H1 (cell line): ENCODE measurements at regions of chr12 and their contacts with region 1.

Region 1: GRCh38 chr12:111788178-111788654 is 21.5 kb downstream of the ALDH2 start:
- DNase-seq: no peak
- H3K4me3 ChIP-seq: no peak overlapping the region
- H3K27ac ChIP-seq: no peak overlapping the region
- H3K4me1 ChIP-seq: no peaks in the 10 kb centered on the region
- H3K27me3 ChIP-seq: no peaks in the 10 kb centered on the region
- CTCF ChIP-seq: peak in 2 of 3 experiments; percentile 35 to 54; a peak in 3 of 4 replicates
- EP300 ChIP-seq: no peak
- POLR2A ChIP-seq: no peak
- RAD21 ChIP-seq: peak; percentile 66 to 75

Region 2: DNA sequence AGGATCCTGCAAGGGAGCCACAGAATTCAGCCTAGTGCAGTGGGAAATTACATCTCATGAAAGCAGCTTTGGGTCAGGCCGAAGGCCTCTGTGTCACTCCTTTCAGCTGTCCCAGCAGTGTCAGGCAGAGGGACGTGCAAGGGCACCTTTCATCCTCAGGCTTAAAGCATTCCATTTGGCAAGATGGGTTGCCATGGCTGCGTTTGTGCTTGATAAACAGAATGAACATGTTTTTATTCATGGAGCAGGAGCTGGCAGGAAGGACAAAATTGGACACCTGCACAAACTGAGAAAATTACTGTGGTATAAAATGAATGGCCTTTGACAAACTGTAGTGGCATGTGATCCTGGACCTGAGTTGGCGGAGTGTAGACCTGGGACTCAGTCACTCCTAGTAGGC is 72.9 kb before region 1 on chr12:
- CTCF ChIA-PET with region 1: interaction called, 11 read pairs
- POLR2A ChIA-PET with region 1: no interaction called
- DNase-seq: no peak
- H3K4me3 ChIP-seq: no peak overlapping the region
- H3K27ac ChIP-seq: no peak overlapping the region
- H3K4me1 ChIP-seq: no peaks in the 10 kb centered on the region
- H3K27me3 ChIP-seq: no peaks in the 10 kb centered on the region
- CTCF ChIP-seq: no peak
- EP300 ChIP-seq: no peak
- POLR2A ChIP-seq: no peak
- RAD21 ChIP-seq: no peak

Region 3: DNA sequence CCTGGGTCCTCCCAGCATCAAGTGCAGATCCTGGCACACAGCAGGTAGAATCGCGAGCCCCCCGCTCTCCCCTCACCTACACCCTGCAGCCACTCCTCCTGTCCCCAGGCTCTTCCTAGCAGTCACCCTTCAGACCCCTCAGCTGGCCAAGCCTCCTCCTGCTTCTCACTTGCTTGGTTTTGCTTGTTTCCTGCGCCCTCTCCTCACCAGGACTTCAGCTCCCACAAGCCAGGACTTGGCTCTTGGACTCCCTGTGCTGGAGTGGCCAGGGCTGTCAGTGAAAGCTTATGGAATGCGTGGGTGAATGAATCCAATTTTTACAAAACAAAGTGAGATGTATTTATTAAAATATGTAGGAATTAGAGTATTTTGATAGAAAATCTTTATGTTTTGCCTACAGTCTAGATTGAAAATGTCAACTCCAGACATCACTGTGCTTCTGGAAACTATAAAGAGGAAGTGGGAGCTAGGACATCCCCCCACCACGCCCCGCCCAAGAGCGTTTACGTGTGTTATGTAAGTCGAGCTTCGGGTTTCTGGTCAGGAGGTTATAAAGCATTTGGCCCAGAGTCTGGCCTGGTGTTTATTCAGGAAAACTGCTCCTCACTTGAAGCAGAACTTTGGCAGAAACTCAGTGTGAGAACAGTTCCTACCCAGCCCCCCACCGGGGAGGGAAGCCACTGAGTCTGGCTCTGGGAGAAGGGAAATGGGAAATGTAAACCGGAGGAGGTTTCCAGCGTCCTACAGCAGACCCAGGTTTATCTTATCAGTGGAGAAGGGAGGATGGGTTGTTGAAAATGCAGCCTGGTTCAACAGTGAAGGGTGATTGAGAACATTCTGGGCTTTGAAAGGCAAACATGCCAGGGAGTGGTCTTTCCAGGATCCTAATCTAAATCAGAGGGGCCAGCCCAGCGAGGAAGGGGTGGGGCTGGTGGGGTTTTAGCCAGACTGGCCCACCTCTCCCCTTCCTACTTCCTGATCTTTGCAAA is 12.7 kb before region 1 on chr12:
- CTCF ChIA-PET with region 1: interaction called, 11 read pairs
- POLR2A ChIA-PET with region 1: interaction called, 4 read pairs
- DNase-seq: no peak
- H3K4me3 ChIP-seq: no peak overlapping the region
- H3K27ac ChIP-seq: no peak overlapping the region
- H3K4me1 ChIP-seq: peaks cover 0 to 3% (median 0%) of the 10 kb centered on the region in 4 experiments; a peak in 4 of 7 replicates
- H3K27me3 ChIP-seq: no peaks in the 10 kb centered on the region
- CTCF ChIP-seq: no peak
- EP300 ChIP-seq: no peak
- POLR2A ChIP-seq: no peak
- RAD21 ChIP-seq: no peak

Region 4: GRCh38 chr12:111842556-111843396 is 54.6 kb after region 1 on chr12:
- CTCF ChIA-PET with region 1: no interaction called
- POLR2A ChIA-PET with region 1: no interaction called
- DNase-seq: no peak
- H3K4me3 ChIP-seq: peak overlapping the region; percentile 75 to 94 (median 86)
- H3K27ac ChIP-seq: peak overlapping the region; percentile 99
- H3K4me1 ChIP-seq: no peaks in the 10 kb centered on the region; a peak in 2 of 7 replicates
- H3K27me3 ChIP-seq: no peaks in the 10 kb centered on the region
- CTCF ChIP-seq: no peak
- EP300 ChIP-seq: no peak
- POLR2A ChIP-seq: no peak
- RAD21 ChIP-seq: no peak

Region 5: GRCh38 chr12:111868676-111869588 is 80.7 kb after region 1 on chr12:
- CTCF ChIA-PET with region 1: no interaction called
- POLR2A ChIA-PET with region 1: no interaction called
- DNase-seq: peak in 1 of 2 experiments; percentile 61
- H3K4me3 ChIP-seq: peak overlapping the region in 2 of 4 experiments; percentile 4 to 46; a peak in 3 of 8 replicates
- H3K27ac ChIP-seq: 0 out of 2 replicates have a peak overlapping the region, but pooled peaks have one; percentile 43
- H3K4me1 ChIP-seq: peaks cover 6 to 32% (median 19%) of the 10 kb centered on the region in 4 experiments
- H3K27me3 ChIP-seq: no peaks in the 10 kb centered on the region
- CTCF ChIP-seq: no peak
- EP300 ChIP-seq: no peak
- POLR2A ChIP-seq: no peak
- RAD21 ChIP-seq: no peak